ENCODE measurements at regions of chr6 and their contacts with region 1.

Region 1: DNA sequence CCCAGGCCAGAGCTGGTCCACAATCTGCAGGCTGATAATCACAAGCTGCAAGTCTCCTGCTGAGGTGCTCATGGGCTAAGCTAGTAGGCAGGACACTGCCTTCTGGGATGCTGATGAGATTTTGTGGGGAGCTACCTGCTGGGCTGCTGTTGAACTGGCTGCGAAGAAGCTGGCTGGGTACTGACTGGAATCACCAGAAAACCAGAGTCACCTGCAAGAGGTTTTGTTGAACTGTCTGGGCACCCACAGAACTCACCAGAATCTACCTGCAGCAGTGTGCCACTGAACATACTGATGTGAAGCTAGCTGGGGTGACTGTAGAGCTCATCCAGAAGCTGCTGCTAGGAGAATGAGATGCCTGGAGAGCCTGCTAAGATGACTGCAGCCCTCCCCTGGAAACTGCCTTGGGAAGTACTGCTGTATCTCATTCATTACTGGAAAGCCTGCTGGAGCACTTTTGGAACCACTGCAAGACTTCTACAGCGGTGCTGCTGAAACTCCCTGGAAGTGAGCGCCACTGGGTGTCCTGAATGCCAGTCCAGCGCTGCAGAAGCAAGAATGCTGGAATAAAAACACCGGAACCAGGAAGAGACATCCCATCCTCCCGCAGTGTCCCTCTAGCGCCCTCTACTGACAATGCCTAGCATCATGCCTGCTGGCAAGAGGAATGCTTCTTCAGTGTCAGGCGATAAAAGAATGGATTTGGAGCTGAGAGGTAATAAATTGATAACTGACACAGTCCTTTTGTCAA is 64.9 kb upstream of the ARHGAP18 start:
- DNase-seq: peak; percentile 57
- ATAC-seq: peak; percentile 33
- H3K4me3 Mint-ChIP-seq: no peak overlapping the region
- H3K27ac Mint-ChIP-seq: no peak overlapping the region
- H3K4me1 Mint-ChIP-seq: peaks cover 4% of the 10 kb centered on the region
- H3K27me3 Mint-ChIP-seq: peaks cover 22% of the 10 kb centered on the region

Region 2: GRCh38 chr6:129598244-129599187 is 176.4 kb before region 1 on chr6:
- CTCF ChIA-PET with region 1: interaction called, 13 read pairs
- DNase-seq: no peak
- ATAC-seq: peak; percentile 76
- H3K4me3 Mint-ChIP-seq: no peak overlapping the region
- H3K27ac Mint-ChIP-seq: peak overlapping the region; percentile 14
- H3K4me1 Mint-ChIP-seq: peaks cover 4% of the 10 kb centered on the region
- H3K27me3 Mint-ChIP-seq: no peaks in the 10 kb centered on the region

Region 3: DNA sequence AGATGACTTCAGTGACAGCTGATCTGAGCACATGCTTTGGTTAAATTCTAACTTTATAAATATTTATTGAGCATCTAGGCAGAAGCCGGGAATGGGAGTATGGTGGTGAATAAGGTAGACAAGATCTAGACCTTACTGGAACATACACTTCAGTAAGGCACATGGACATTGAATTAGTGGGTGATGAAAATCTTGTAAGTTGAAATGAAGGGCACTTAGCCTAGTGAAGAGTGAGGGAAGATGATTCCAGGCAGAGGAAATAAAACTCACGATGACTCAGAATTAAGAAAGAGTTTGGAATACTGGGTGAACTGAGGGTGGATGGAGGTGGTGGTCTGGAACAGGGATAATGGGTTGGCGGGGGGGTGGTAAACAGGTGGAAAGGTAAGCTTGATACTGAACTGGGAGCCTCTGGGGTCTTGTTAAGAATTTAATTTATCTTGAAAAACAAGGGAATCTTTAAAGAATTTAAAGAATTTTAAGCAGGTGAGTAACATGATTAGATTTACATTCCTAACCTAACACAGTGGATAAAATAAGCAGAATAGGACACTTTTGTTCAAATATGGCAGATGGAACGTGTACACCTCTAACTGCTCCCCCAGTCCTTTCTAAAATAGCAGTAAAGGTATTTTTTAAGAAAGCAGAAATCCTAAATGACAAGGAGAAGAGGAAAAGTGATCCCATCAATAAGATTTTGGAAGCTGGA is 10.3 kb after region 1 on chr6:
- CTCF ChIA-PET with region 1: interaction called, 19 read pairs
- DNase-seq: no peak
- ATAC-seq: no peak
- H3K4me3 Mint-ChIP-seq: no peak overlapping the region
- H3K27ac Mint-ChIP-seq: no peak overlapping the region
- H3K4me1 Mint-ChIP-seq: no peaks in the 10 kb centered on the region
- H3K27me3 Mint-ChIP-seq: peaks cover 8% of the 10 kb centered on the region

Region 4: DNA sequence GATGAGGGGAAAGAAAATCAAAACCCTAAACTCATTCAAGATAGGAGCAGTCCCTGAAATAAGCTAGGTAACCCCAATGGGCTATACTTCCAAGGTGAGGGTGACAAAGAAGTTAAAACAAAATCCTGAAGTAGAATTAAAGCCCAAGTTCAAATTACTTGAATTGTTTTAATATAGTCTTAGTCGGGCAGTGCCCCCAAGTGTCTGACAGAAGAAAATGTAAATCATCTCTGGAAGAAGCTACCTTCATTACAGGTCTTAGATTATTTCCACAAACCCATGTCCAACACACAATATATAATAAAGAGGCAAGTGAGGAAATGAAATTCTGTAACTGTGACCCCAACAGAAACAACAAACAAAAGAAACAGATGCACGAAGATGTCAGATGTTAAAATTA is 206.7 kb after region 1 on chr6:
- CTCF ChIA-PET with region 1: no interaction called
- DNase-seq: no peak
- ATAC-seq: no peak
- H3K4me3 Mint-ChIP-seq: no peak overlapping the region
- H3K27ac Mint-ChIP-seq: no peak overlapping the region
- H3K4me1 Mint-ChIP-seq: no peaks in the 10 kb centered on the region
- H3K27me3 Mint-ChIP-seq: peaks cover 3% of the 10 kb centered on the region